ENCODE measurements at regions of chr11 and their contacts with region 1.

Region 1: GRCh38 chr11:2892215-2893020 is 6.8 kb upstream of the CDKN1C start:
- DNase-seq: peak in 8 of 9 experiments; percentile 40 to 80 (median 60)
- ATAC-seq: peak; percentile 65
- H3K4me3 ChIP-seq: peak overlapping the region; percentile 48 to 51
- H3K4me3 Mint-ChIP-seq: peak overlapping the region; percentile 68
- H3K27ac ChIP-seq: peak overlapping the region; percentile 31 to 71
- H3K27ac Mint-ChIP-seq: peak overlapping the region; percentile 88
- H3K4me1 ChIP-seq: peaks cover 35% of the 10 kb centered on the region
- H3K4me1 Mint-ChIP-seq: peaks cover 25% of the 10 kb centered on the region
- H3K27me3 ChIP-seq: no peaks in the 10 kb centered on the region
- H3K27me3 Mint-ChIP-seq: no peaks in the 10 kb centered on the region
- CTCF ChIP-seq: peak; percentile 88

Region 2: DNA sequence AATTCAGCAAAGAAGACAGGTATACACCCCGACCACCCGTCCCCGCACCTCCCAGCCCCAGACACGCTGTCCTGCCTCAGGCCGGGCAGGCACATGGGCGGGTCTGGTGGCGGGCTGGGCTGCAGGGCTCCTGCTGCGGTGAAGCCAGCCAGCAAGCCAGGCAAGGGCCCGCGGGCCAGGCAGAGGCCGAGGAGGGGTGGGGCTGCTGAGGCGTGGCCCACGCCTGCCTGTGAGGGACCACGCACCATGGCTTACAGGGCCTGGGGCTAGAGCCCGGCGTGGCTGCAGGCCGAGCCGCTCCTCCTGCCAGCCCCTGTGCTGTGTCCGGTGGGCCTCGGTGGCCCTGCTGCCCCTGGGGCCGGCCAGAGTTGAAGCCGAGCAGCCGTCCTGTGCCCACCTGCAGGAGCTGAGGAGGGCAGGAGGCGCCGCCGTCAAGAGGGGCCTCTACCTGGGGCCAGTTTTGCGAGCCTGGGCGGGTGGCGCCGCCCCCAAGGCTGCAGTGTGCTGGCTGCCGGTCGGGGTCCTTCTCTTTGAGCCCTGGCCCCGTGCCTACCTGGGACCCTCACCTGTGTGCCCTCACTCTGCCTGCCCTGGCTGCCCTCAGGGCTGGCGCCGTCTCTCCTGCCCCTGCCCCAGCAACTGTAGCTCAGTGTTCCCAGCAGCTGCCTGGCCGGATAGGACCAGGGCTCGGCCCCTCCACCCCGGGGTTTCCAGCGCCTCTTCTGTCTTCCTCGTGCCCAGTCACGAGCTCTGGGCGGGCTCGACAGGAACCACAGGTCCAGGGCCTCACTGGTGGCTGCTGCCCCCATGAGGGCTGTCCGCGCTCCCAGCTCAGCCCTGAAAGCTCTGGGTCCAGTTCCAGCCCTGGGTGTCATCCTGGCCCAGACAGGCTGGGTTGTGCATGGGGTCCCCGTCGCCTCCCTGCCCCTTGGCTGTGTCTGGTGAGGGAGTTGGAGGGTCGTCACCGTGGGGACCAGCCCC is 1444.3 kb before region 1 on chr11:
- CTCF ChIA-PET with region 1: no interaction called
- POLR2A ChIA-PET with region 1: no interaction called
- intact Hi-C with region 1: no loop called
- DNase-seq: no peak
- ATAC-seq: no peak
- H3K4me3 ChIP-seq: no peak overlapping the region
- H3K4me3 Mint-ChIP-seq: no peak overlapping the region
- H3K27ac ChIP-seq: no peak overlapping the region
- H3K27ac Mint-ChIP-seq: no peak overlapping the region
- H3K4me1 ChIP-seq: no peaks in the 10 kb centered on the region
- H3K4me1 Mint-ChIP-seq: no peaks in the 10 kb centered on the region
- H3K27me3 ChIP-seq: no peaks in the 10 kb centered on the region
- H3K27me3 Mint-ChIP-seq: peaks cover 2% of the 10 kb centered on the region
- CTCF ChIP-seq: no peak

Region 3: DNA sequence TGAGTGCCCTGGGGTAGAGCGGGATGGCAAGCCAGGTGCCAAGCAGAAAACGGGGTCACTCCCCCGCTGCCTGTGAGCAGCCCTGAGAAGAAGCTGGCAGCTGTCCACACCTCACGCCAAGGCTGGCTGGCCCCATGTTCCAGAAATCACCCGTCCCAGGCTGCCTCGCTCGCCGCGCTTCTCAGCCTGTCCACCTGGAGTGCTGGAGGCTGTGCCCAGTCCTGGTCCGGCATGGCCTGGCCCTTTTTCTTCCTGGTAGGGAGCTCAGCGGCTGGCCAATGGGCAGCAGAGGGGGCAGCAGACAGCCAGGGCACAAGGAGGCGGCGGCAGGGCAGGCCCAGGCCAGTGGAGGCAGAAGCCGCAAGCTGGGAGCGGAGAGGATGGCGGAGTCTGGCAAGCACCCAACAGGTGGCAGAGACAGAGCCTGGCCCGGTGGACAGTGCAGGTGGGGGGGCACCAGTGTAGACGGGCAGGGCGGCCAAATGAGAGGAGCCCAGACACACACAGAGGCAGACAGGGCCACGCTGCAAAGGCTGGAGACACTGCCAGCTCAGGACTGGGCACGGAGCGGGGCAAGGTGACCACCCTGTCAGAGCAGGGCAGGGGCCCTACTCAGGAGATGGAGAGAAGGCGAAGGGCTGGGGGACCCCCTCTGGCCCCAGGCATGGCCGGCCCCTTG is 683.6 kb before region 1 on chr11:
- CTCF ChIA-PET with region 1: no interaction called
- POLR2A ChIA-PET with region 1: no interaction called
- intact Hi-C with region 1: no loop called
- DNase-seq: peak in 2 of 9 experiments; percentile 3 to 5
- ATAC-seq: no peak
- H3K4me3 ChIP-seq: no peak overlapping the region
- H3K4me3 Mint-ChIP-seq: no peak overlapping the region
- H3K27ac ChIP-seq: no peak overlapping the region
- H3K27ac Mint-ChIP-seq: no peak overlapping the region
- H3K4me1 ChIP-seq: peaks cover 12% of the 10 kb centered on the region
- H3K4me1 Mint-ChIP-seq: peaks cover 9% of the 10 kb centered on the region
- H3K27me3 ChIP-seq: no peaks in the 10 kb centered on the region
- H3K27me3 Mint-ChIP-seq: no peaks in the 10 kb centered on the region
- CTCF ChIP-seq: no peak

Region 4: GRCh38 chr11:2428322-2428795 is 464.1 kb before region 1 on chr11:
- CTCF ChIA-PET with region 1: interaction called, 11 read pairs
- POLR2A ChIA-PET with region 1: no interaction called
- intact Hi-C with region 1: loop called (anchors 1 to 5 kb)
- DNase-seq: peak; percentile 75 to 94 (median 87)
- ATAC-seq: peak; percentile 91
- H3K4me3 ChIP-seq: no peak overlapping the region
- H3K4me3 Mint-ChIP-seq: no peak overlapping the region
- H3K27ac ChIP-seq: no peak overlapping the region
- H3K27ac Mint-ChIP-seq: no peak overlapping the region
- H3K4me1 ChIP-seq: no peaks in the 10 kb centered on the region
- H3K4me1 Mint-ChIP-seq: no peaks in the 10 kb centered on the region
- H3K27me3 ChIP-seq: no peaks in the 10 kb centered on the region
- H3K27me3 Mint-ChIP-seq: no peaks in the 10 kb centered on the region
- CTCF ChIP-seq: peak; percentile 70

Region 5: DNA sequence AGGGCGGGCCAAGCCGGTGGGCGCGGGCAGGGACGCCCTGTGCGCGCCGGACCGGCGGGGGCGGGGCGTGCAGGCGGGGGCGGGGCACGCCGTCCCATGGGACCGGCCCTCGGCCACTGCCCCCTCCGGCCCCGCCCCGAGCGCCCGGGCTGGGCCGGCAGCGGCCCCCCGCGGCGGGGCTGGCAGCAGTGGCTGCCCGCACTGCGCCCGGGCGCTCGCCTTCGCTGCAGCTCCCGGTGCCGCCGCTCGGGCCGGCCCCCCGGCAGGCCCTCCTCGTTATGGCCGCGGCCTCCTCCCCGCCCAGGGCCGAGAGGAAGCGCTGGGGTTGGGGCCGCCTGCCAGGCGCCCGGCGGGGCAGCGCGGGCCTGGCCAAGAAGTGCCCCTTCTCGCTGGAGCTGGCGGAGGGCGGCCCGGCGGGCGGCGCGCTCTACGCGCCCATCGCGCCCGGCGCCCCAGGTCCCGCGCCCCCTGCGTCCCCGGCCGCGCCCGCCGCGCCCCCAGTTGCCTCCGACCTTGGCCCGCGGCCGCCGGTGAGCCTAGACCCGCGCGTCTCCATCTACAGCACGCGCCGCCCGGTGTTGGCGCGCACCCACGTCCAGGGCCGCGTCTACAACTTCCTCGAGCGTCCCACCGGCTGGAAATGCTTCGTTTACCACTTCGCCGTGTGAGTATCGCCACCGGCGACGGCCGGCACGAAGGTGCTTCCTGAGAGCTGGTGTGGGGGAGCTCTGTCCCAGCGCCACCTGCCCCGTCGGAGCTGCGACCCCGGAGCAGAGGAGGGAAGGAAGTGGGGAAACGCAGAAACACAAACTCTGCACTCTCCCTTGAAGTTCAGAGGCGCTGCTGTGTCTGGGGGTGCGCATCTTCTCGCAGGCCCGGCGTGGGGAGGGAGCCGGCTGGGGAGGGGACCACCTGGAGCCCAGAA is 447.3 kb before region 1 on chr11 and contains the start of gene KCNQ1:
- CTCF ChIA-PET with region 1: interaction called, 4 read pairs
- POLR2A ChIA-PET with region 1: no interaction called
- intact Hi-C with region 1: loop called in 1 of 2 experiments (anchors 5 kb)
- DNase-seq: peak in 4 of 9 experiments; percentile 29 to 68 (median 65)
- ATAC-seq: peak; percentile 41
- H3K4me3 ChIP-seq: peak within 1 kb of the TSS; percentile 53 to 56
- H3K4me3 Mint-ChIP-seq: peak within 1 kb of the TSS; percentile 91
- H3K27ac ChIP-seq: peak within 1 kb of the TSS in 1 of 2 experiments; percentile 35
- H3K27ac Mint-ChIP-seq: peak within 1 kb of the TSS; percentile 88
- H3K4me1 ChIP-seq: peaks cover 51% of the 10 kb centered on the region
- H3K4me1 Mint-ChIP-seq: peaks cover 41% of the 10 kb centered on the region
- H3K27me3 ChIP-seq: peaks cover 0 to 25% of the 10 kb centered on the region in 2 experiments
- H3K27me3 Mint-ChIP-seq: no peaks in the 10 kb centered on the region
- CTCF ChIP-seq: no peak
- total RNA-seq, gene KCNQ1: 24.9 to 25.7 TPM

Region 6: GRCh38 chr11:2699531-2700414 is 192.6 kb before region 1 on chr11 and contains the start of gene KCNQ1OT1:
- CTCF ChIA-PET with region 1: interaction called, 3 read pairs
- POLR2A ChIA-PET with region 1: no interaction called
- intact Hi-C with region 1: loop called (anchors 2 to 5 kb)
- DNase-seq: peak; percentile 74 to 94 (median 84)
- ATAC-seq: peak; percentile 93
- H3K4me3 ChIP-seq: peak within 1 kb of the TSS; percentile 61 to 67
- H3K4me3 Mint-ChIP-seq: peak within 1 kb of the TSS; percentile 80
- H3K27ac ChIP-seq: peak within 1 kb of the TSS; percentile 40 to 43
- H3K27ac Mint-ChIP-seq: peak within 1 kb of the TSS; percentile 62
- H3K4me1 ChIP-seq: peaks cover 5% of the 10 kb centered on the region
- H3K4me1 Mint-ChIP-seq: peaks cover 9% of the 10 kb centered on the region
- H3K27me3 ChIP-seq: no peaks in the 10 kb centered on the region
- H3K27me3 Mint-ChIP-seq: no peaks in the 10 kb centered on the region
- CTCF ChIP-seq: no peak
- total RNA-seq, gene KCNQ1OT1: 0.42 to 0.52 TPM

Region 7: GRCh38 chr11:2877474-2877873 is 14.9 kb before region 1 on chr11:
- CTCF ChIA-PET with region 1: interaction called, 29 read pairs
- POLR2A ChIA-PET with region 1: interaction called, 4 read pairs
- intact Hi-C with region 1: no loop called
- DNase-seq: no peak
- ATAC-seq: no peak
- H3K4me3 ChIP-seq: no peak overlapping the region
- H3K4me3 Mint-ChIP-seq: no peak overlapping the region
- H3K27ac ChIP-seq: no peak overlapping the region
- H3K27ac Mint-ChIP-seq: no peak overlapping the region
- H3K4me1 ChIP-seq: no peaks in the 10 kb centered on the region
- H3K4me1 Mint-ChIP-seq: no peaks in the 10 kb centered on the region
- H3K27me3 ChIP-seq: no peaks in the 10 kb centered on the region
- H3K27me3 Mint-ChIP-seq: peaks cover 2% of the 10 kb centered on the region
- CTCF ChIP-seq: no peak

Measured in CD8-positive, alpha-beta T cell (primary cell).